Dorsolateral prefrontal cortex (tissue), 120 donors: ENCODE measurements at regions of chr12 and their contacts with region 1.

Region 1: GRCh38 chr12:111313833-111314259 is 55.0 kb downstream of the PHETA1 start:
- DNase-seq: peak; percentile 55 to 80 (median 67)
- H3K4me3 ChIP-seq: peak overlapping the region in 1 of 59 donors; percentile 24
- H3K27ac ChIP-seq: no peak overlapping the region
- H3K27me3 ChIP-seq: peaks cover 0 to 5% (median 0%) of the 10 kb centered on the region in 45 donors
- CTCF ChIP-seq: peak; percentile 83 to 99 (median 96)

Region 2: GRCh38 chr12:110893956-110894355 is 419.9 kb before region 1 on chr12:
- intact Hi-C with region 1: loop called in 1 of 2 experiments (anchors 5 kb)
- DNase-seq: no peak
- H3K4me3 ChIP-seq: peak overlapping the region in 5 of 59 donors; percentile 40 to 61 (median 53)
- H3K27ac ChIP-seq: no peak overlapping the region
- H3K27me3 ChIP-seq: peaks cover 0 to 10% (median 0%) of the 10 kb centered on the region in 45 donors
- CTCF ChIP-seq: no peak

Region 3: DNA sequence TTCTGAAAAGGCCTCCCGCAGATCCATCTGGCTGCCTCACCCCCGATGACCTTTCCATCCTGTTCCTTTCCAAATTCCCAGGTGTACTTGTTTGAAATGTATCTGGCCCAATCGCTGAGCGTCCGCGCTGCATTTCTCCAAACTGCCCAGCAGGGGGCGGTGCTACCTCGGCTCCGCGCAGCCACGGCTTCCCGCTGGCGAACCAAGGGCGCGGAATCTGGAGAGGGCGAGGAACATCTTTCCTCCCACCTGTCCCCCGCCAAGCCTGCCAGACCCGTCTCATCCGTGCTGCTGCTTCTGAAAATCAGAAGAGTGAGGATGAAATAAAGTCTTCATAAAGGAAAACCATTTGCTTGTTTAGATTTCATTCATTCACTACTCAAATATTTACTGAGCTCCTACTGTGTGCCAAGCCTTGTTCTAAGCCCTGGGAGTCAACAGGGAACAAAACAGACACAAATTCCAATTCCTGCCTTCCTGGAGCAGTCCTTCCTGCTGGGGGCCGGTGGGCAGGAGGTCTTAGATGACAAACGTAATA is 376.7 kb before region 1 on chr12:
- intact Hi-C with region 1: loop called (anchors 5 kb)
- DNase-seq: peak in 8 of 10 donors; percentile 37 to 80 (median 55)
- H3K4me3 ChIP-seq: peak overlapping the region in 2 of 59 donors; percentile 7 to 23
- H3K27ac ChIP-seq: no peak overlapping the region
- H3K27me3 ChIP-seq: peaks cover 0 to 63% (median 6%) of the 10 kb centered on the region in 45 donors
- CTCF ChIP-seq: peak; percentile 71 to 97 (median 92)

Region 4: DNA sequence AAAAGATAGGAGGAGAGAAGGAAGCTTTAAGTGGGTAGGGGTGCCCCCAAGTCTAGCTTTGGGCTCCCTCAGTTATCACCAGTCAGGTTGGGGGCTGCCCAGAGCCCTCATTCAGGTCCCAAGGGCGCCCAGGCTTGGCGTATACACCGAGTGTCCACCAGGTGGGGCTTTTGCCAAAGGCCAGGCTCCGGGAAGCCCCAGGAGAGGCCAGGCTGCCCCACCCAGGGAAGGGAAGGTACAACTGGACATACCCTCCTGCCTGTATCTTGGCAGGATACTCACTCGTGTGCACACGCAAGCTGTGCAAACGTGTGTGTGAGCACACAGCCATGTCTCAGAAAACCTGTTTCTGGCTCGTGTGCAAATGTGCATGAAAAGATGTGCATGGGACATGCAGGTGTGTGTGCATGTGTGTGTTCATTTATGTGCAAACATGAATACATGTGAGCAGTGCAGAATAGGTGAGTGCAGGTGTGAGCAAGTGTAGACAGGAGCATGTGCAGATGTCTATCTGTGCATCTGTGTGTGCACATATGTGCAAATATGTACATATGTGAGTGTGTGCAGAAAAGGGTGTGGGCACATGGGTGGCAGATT is 289.5 kb before region 1 on chr12:
- intact Hi-C with region 1: loop called (anchors 2 to 10 kb)
- DNase-seq: peak in 7 of 10 donors; percentile 30 to 56 (median 38)
- H3K4me3 ChIP-seq: no peak overlapping the region
- H3K27ac ChIP-seq: no peak overlapping the region
- H3K27me3 ChIP-seq: peaks cover 0 to 80% (median 26%) of the 10 kb centered on the region in 45 donors
- CTCF ChIP-seq: peak; percentile 23 to 78 (median 66)

Region 5: GRCh38 chr12:111451649-111452129 is 137.8 kb after region 1 on chr12:
- intact Hi-C with region 1: no loop called
- DNase-seq: peak in 3 of 10 donors; percentile 9 to 32 (median 28)
- H3K4me3 ChIP-seq: no peak overlapping the region
- H3K27ac ChIP-seq: peak overlapping the region in 51 of 59 donors; percentile 10 to 88 (median 66)
- H3K27me3 ChIP-seq: no peaks in the 10 kb centered on the region
- CTCF ChIP-seq: peak; percentile 82 to 98 (median 91)